ENCODE measurements at regions of chr2 and their contacts with region 1.

Region 1: GRCh38 chr2:46887028-46887885 is 28.3 kb downstream of the MCFD2 start:
- DNase-seq: no peak
- ATAC-seq: no peak
- H3K4me3 ChIP-seq: no peak overlapping the region
- H3K27ac ChIP-seq: no peak overlapping the region
- H3K4me1 ChIP-seq: peaks cover 8% of the 10 kb centered on the region
- H3K27me3 ChIP-seq: peaks cover 6 to 49% of the 10 kb centered on the region in 2 experiments
- CTCF ChIP-seq: no peak
- EP300 ChIP-seq: no peak
- POLR2A ChIP-seq: no peak
- RAD21 ChIP-seq: no peak

Region 2: DNA sequence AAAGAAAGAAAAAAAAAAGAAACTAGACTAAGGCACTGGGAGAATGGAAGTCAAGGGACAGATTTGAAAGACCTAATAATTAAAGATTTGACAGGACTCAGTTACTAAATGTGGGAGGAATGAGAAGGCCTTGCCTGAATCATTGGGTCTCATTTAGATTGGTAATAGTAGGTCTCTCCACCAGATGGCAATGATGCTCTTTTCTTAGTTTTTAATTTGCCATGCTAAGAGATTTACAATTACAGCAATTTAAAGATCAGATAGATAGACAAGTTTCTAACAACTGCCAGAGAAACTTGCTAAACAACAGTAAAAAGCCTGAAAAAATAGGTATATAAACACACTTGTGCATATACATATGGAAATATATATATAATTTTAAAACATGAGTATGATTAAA is 254.9 kb before region 1 on chr2:
- CTCF ChIA-PET with region 1: interaction called, 20 read pairs
- POLR2A ChIA-PET with region 1: no interaction called
- in situ Hi-C with region 1: no loop called
- intact Hi-C with region 1: loop called (anchors 1 kb)
- DNase-seq: peak; percentile 50
- ATAC-seq: peak; percentile 55; the same call in 2 of the 3 replicates
- H3K4me3 ChIP-seq: no peak overlapping the region
- H3K27ac ChIP-seq: no peak overlapping the region
- H3K4me1 ChIP-seq: no peaks in the 10 kb centered on the region
- H3K27me3 ChIP-seq: no peaks in the 10 kb centered on the region
- CTCF ChIP-seq: peak; percentile 61
- EP300 ChIP-seq: no peak
- POLR2A ChIP-seq: no peak
- RAD21 ChIP-seq: peak; percentile 63; the same call in 1 of the 2 replicates

Region 3: DNA sequence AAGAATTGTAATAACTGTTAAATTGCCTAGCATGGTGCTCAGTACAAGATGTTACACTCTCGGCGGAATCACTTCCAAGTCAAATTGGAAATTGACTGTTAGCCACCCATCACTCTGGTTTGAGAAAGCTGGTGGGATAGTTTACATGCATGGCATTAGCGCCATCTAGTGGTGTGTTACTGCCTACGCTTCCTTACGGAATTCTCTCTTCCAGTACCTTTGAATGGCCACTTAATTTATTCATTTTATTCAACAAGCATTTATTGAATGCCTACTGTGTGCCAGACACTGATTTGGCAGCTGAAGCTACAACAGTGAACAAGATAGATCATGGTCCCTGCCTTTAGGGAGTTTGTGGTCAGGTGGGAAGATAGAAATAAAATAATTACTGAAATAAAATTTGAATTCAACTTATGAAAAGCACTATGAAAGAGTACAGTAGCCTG is 236.7 kb before region 1 on chr2:
- CTCF ChIA-PET with region 1: interaction called, 10 read pairs
- POLR2A ChIA-PET with region 1: no interaction called
- in situ Hi-C with region 1: loop called (anchors 5 kb)
- intact Hi-C with region 1: loop called (anchors 1 kb)
- DNase-seq: peak; percentile 82
- ATAC-seq: peak; percentile 72
- H3K4me3 ChIP-seq: no peak overlapping the region
- H3K27ac ChIP-seq: no peak overlapping the region
- H3K4me1 ChIP-seq: peaks cover 28% of the 10 kb centered on the region
- H3K27me3 ChIP-seq: peaks cover 0 to 6% of the 10 kb centered on the region in 2 experiments; a peak in 1 of 5 replicates
- CTCF ChIP-seq: peak; percentile 96
- EP300 ChIP-seq: no peak
- POLR2A ChIP-seq: no peak
- RAD21 ChIP-seq: peak; percentile 93

Region 4: GRCh38 chr2:46776687-46777327 is 110.5 kb before region 1 on chr2:
- CTCF ChIA-PET with region 1: interaction called, 3 read pairs
- POLR2A ChIA-PET with region 1: no interaction called
- in situ Hi-C with region 1: no loop called
- intact Hi-C with region 1: loop called (anchors 1 kb)
- DNase-seq: peak; percentile 69
- ATAC-seq: no peak
- H3K4me3 ChIP-seq: no peak overlapping the region
- H3K27ac ChIP-seq: no peak overlapping the region
- H3K4me1 ChIP-seq: peaks cover 49% of the 10 kb centered on the region
- H3K27me3 ChIP-seq: no peaks in the 10 kb centered on the region
- CTCF ChIP-seq: peak; percentile 77
- EP300 ChIP-seq: no peak
- POLR2A ChIP-seq: no peak
- RAD21 ChIP-seq: peak; percentile 63

Region 5: GRCh38 chr2:46803911-46804670 is 83.2 kb before region 1 on chr2:
- CTCF ChIA-PET with region 1: interaction called, 5 read pairs
- POLR2A ChIA-PET with region 1: no interaction called
- in situ Hi-C with region 1: no loop called
- intact Hi-C with region 1: loop called (anchors 2 kb)
- DNase-seq: no peak
- ATAC-seq: no peak
- H3K4me3 ChIP-seq: no peak overlapping the region
- H3K27ac ChIP-seq: no peak overlapping the region
- H3K4me1 ChIP-seq: no peaks in the 10 kb centered on the region
- H3K27me3 ChIP-seq: no peaks in the 10 kb centered on the region
- CTCF ChIP-seq: no peak
- EP300 ChIP-seq: no peak
- POLR2A ChIP-seq: no peak
- RAD21 ChIP-seq: no peak

Measured in HepG2 (cell line).